ENCODE measurements at regions of chr12 and their contacts with region 1.

Region 1: GRCh38 chr12:89040146-89040964 is 311.9 kb downstream of the DUSP6 start:
- DNase-seq: no peak
- H3K4me3 ChIP-seq: no peak overlapping the region
- CTCF ChIP-seq: no peak

Region 2: GRCh38 chr12:89461649-89462612 is 421.6 kb after region 1 on chr12:
- in situ Hi-C with region 1: loop called (anchors 10 kb)
- DNase-seq: peak; percentile 66
- H3K4me3 ChIP-seq: no peak overlapping the region
- CTCF ChIP-seq: peak; percentile 22